PC-3 (cell line): ENCODE measurements at regions of chr1 and their contacts with region 1.

Region 1: DNA sequence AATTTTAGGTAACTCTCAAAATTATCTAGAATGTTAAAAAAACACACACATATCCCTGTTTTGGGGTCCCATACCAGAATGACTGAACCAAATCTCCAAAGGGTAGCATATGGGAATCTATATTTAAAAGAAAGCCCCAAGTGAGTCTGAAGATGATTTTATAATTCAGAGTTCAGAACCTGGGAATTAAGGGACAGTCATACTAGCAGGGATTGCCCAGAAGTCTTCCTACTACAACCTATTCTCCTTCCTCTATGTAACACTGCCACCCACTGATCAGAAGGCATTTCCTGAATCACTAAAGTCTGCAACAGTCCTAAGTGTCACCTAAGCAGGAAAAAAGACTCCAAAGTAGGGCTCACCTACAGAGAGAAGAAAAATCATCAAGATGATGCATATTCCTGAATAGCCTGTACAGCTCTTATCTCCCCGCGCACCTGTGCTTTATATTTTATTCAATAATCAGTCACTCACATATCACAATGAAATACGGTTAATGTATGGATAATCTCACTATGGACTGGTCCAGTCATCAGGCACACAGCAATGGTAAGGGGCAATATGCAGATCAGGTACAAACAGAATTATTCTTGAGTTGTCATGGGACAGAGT is 4.9 kb downstream of the RGS1 start:
- DNase-seq: peak; percentile 71
- ATAC-seq: peak; percentile 97
- H3K4me3 ChIP-seq: no peak overlapping the region
- H3K27ac ChIP-seq: no peak overlapping the region
- H3K4me1 ChIP-seq: peaks cover 4% of the 10 kb centered on the region; the same call in 1 of the 2 replicates
- H3K27me3 ChIP-seq: no peaks in the 10 kb centered on the region
- CTCF ChIP-seq: peak; percentile 80

Region 2: DNA sequence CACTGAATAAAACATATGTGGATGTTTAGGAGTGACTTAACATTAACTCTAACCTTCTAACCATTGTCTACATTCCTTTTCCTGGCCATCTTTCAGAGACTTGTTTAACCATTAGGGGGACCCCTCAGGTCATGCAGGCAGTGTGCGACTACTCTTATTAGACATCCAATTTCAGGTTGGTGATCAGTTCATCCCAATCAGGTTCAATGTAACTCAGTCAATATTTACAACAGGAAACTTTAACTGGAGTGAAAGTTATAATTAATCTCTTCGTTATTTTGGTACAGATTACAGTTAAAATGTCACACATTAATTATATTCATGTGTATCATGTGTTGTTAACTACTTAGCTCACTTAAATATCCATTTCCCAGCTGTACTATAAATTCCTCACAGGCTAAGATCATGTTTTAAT is 73.7 kb before region 1 on chr1:
- CTCF ChIA-PET with region 1: no interaction called
- POLR2A ChIA-PET with region 1: no interaction called
- intact Hi-C with region 1: loop called (anchors 2 kb)
- DNase-seq: peak; percentile 54
- ATAC-seq: peak; percentile 60
- H3K4me3 ChIP-seq: no peak overlapping the region
- H3K27ac ChIP-seq: no peak overlapping the region
- H3K4me1 ChIP-seq: no peaks in the 10 kb centered on the region
- H3K27me3 ChIP-seq: no peaks in the 10 kb centered on the region
- CTCF ChIP-seq: peak; percentile 63

Region 3: GRCh38 chr1:192639607-192640368 is 59.3 kb after region 1 on chr1:
- CTCF ChIA-PET with region 1: no interaction called
- POLR2A ChIA-PET with region 1: no interaction called
- intact Hi-C with region 1: no loop called
- DNase-seq: peak; percentile 83
- ATAC-seq: peak; percentile 89
- H3K4me3 ChIP-seq: peak overlapping the region; percentile 24; the same call in 1 of the 2 replicates
- H3K27ac ChIP-seq: peak overlapping the region; percentile 74
- H3K4me1 ChIP-seq: peaks cover 39% of the 10 kb centered on the region
- H3K27me3 ChIP-seq: no peaks in the 10 kb centered on the region
- CTCF ChIP-seq: no peak

Region 4: DNA sequence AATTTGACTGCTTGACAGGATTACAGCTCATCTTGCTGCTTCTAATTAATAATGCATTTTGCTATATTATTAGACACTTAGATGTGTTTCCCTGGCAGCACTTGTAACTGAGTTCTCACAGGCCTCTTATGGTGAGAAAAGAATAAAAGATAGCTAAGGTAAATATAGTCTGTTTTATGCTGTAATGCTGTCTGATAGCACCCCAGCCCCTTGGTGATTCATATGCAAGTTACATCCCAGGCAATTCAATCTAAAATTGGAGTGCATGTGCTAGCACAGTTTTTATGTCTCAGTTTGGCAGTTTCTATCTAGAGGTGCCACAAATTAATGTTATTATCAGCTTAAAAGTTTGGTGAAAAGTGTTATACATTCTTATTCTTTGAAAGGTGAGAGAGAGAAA is 97.6 kb after region 1 on chr1:
- CTCF ChIA-PET with region 1: no interaction called
- POLR2A ChIA-PET with region 1: no interaction called
- intact Hi-C with region 1: no loop called
- DNase-seq: no peak
- ATAC-seq: no peak
- H3K4me3 ChIP-seq: no peak overlapping the region
- H3K27ac ChIP-seq: no peak overlapping the region
- H3K4me1 ChIP-seq: peaks cover 7% of the 10 kb centered on the region; the same call in 1 of the 2 replicates
- H3K27me3 ChIP-seq: no peaks in the 10 kb centered on the region
- CTCF ChIP-seq: no peak